GM13977 (cell line): ENCODE measurements at regions of chr19 and their contacts with region 1.

Region 1: DNA sequence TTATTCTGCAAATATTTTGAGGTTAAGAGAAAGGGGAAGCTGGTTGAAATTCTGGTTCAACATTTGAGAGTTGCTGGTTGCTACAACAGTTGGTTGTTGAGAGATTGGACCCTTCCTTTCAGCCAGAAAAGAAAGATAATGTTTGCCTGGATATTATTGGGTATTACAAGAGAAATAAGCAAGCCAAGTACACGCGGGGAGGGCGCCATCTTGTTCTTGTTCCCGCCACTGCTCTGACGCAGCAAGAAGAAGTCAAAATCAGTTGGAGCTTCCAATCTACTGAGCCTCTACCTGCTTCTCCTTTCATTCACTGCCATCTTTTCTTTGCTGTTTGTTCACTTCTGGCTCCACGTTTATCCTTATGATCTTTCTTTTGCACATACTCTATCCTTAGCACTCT is 18.4 kb downstream of the BSPH1 start:
- DNase-seq: no peak
- CTCF ChIP-seq: no peak

Region 2: DNA sequence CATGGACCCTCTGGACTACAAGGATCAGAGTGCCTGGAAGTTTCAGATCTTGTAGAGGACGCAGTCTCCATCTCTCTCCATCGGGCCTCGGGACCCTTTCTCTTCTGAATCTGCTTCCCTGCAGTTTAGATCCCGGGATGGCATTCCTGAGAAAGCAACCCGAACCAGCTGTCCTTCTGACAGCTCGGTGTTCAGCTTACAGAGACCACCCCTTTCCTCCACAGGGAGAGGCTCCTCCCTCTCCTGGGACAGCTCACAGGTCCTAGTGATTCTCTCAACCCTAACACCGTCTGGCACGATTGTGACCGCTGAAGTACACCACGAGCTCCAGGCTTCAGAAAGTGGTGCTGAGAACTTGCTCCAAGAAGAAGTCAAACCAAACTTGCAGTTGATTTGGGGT is 133.6 kb before region 1 on chr19:
- in situ Hi-C with region 1: no loop called
- DNase-seq: no peak
- CTCF ChIP-seq: no peak

Region 3: GRCh38 chr19:48135411-48135810 is 161.9 kb after region 1 on chr19:
- in situ Hi-C with region 1: loop called (anchors 25 kb)
- DNase-seq: no peak
- CTCF ChIP-seq: no peak

Region 4: DNA sequence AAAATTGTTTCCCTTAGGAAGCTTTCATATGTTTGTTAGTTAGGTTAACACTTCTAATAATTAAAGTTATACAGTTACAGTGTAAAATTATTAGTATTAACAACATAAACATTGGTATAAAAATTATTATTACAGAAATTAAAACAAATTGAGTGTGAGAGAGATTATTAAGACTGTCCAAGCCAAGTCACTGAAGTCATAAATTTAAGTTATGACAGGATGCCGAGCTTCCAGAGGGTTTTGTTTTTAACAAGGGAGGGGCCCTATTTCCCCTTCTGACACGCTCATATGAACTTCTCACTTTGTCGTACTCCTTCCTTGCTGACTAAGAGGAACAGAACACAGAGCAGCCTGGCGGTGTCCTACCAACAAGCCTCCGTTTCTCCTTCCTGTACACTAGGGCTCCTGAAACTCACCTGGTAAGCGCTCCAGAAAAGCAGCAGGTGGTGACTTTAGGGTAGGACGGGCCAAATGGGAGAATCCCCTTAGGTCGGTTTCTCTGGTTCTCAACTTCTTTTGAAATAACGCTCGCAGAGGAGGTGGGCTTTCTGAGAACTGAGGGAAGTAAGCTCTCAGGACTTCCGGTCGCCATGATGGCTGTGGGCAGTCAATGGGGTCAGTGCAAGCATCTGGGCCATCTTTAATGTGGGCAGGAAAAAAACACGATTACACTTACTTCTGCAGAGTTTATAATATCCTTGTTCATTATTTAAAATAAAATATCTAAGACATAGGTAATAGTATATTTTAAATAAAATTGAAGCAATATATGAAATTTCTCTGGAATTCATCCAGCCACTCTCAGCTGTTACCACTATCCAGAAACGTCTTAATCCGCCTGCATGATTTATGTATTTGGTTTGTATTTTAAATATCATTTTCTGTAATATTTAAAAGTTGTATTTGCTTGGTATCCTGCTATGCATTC is 282.1 kb after region 1 on chr19 and contains the start of gene CARD8:
- in situ Hi-C with region 1: loop called (anchors 25 kb)
- DNase-seq: peak; percentile 61
- CTCF ChIP-seq: no peak